A549 (cell line): ENCODE measurements at regions of chr19 and their contacts with region 1.

Region 1: GRCh38 chr19:33406521-33407139 is 33.1 kb downstream of the CEBPG start:
- DNase-seq: peak; percentile 76 to 95
- ATAC-seq: peak; percentile 54 to 89
- H3K4me3 ChIP-seq: no peak overlapping the region
- H3K27ac ChIP-seq: no peak overlapping the region
- H3K4me1 ChIP-seq: peaks cover 8% of the 10 kb centered on the region; the same call in 1 of the 3 replicates
- CTCF ChIP-seq: peak; percentile 99
- EP300 ChIP-seq: no peak
- POLR2A ChIP-seq: no peak
- RAD21 ChIP-seq: peak; percentile 100

Region 2: DNA sequence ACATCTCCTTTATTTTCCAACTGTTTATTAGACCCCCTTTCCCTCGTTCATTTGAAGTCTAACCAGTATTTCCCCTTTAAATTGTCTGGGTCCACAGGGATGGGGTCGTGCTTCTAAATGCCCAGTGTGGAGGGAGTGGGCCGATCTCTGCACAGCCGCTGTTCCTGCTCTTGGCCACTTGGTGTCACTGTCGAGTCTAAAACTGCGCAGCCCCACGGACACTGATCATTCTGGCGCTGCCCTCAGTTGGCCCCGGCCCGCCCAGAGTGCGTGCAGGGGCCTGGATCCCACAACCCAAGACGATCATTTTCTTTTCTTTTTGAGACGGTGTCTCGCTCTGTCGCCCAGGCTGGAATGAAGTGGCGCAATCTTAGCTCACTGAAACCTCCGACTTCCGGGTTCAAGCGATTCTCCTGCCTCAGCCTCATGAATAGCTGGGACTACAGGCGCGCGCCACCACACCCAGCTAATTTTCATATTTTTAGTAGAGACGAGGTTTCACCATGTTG is 262.7 kb before region 1 on chr19:
- CTCF ChIA-PET with region 1: interaction called, 15 read pairs
- POLR2A ChIA-PET with region 1: no interaction called
- DNase-seq: peak; percentile 83 to 98
- ATAC-seq: peak; percentile 91 to 97
- H3K4me3 ChIP-seq: no peak overlapping the region
- H3K27ac ChIP-seq: peak overlapping the region; percentile 14 to 62; a peak in 4 of 6 replicates
- H3K4me1 ChIP-seq: no peaks in the 10 kb centered on the region
- CTCF ChIP-seq: peak; percentile 99
- EP300 ChIP-seq: no peak
- POLR2A ChIP-seq: no peak
- RAD21 ChIP-seq: peak; percentile 97

Region 3: GRCh38 chr19:33208904-33209849 is 197.5 kb before region 1 on chr19:
- CTCF ChIA-PET with region 1: interaction called, 29 read pairs
- POLR2A ChIA-PET with region 1: no interaction called
- DNase-seq: no peak
- ATAC-seq: no peak
- H3K4me3 ChIP-seq: no peak overlapping the region
- H3K27ac ChIP-seq: no peak overlapping the region
- H3K4me1 ChIP-seq: no peaks in the 10 kb centered on the region
- CTCF ChIP-seq: no peak
- EP300 ChIP-seq: no peak
- POLR2A ChIP-seq: no peak
- RAD21 ChIP-seq: no peak

Region 4: GRCh38 chr19:33260628-33261418 is 145.8 kb before region 1 on chr19:
- CTCF ChIA-PET with region 1: interaction called, 83 read pairs
- POLR2A ChIA-PET with region 1: no interaction called
- DNase-seq: no peak
- ATAC-seq: 0 out of 6 replicates have a peak, but pooled peaks of 1 of the 2 experiments have one; percentile 7
- H3K4me3 ChIP-seq: no peak overlapping the region
- H3K27ac ChIP-seq: no peak overlapping the region
- H3K4me1 ChIP-seq: no peaks in the 10 kb centered on the region
- CTCF ChIP-seq: no peak
- EP300 ChIP-seq: no peak
- POLR2A ChIP-seq: no peak
- RAD21 ChIP-seq: no peak

Region 5: DNA sequence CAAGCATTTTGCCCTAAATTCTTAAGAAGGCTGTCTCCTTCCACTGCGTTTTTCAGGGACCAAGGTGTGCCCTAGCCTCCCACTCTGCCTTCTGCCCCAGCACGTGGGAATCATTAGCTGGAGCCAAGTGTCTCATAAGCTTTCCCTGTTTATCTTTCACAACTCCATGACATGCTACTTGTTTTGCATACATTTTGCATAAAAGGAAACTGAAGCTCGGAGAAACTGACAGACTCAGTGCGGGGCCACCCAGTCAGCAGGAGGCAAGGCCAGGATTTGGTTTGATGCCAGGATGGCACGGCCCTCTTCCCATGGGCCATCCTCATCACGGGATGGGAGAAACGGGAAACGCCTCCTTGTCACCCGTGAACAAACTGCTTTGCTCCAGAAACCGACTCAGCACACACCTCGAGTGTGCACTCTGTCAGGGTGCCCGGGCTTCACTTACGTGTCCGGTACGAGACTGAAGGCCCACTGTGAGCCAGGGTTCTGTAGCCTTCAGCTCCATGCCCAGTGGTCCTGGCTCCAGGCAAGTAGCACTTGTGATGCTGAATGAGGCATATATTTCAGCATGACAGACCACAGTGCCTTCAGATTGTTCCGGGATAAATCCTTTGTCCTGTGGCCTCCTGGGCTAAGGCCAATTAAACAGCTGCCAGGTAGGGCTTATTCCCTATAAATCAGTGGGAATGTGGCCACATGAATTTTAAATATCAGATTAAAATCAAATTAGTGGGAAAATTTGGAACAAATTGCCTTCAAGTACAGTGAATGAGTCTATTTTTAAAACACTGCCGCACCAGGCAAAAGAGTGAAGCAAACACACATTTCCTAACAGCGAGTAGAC is 113.8 kb before region 1 on chr19:
- CTCF ChIA-PET with region 1: interaction called, 75 read pairs
- POLR2A ChIA-PET with region 1: no interaction called
- DNase-seq: peak in 1 of 2 experiments; percentile 41
- ATAC-seq: peak; percentile 36 to 45
- H3K4me3 ChIP-seq: no peak overlapping the region
- H3K27ac ChIP-seq: peak overlapping the region; percentile 70 to 84
- H3K4me1 ChIP-seq: peaks cover 42% of the 10 kb centered on the region
- CTCF ChIP-seq: no peak; the same call in 1 of the 3 replicates
- EP300 ChIP-seq: no peak
- POLR2A ChIP-seq: no peak
- RAD21 ChIP-seq: no peak

Region 6: DNA sequence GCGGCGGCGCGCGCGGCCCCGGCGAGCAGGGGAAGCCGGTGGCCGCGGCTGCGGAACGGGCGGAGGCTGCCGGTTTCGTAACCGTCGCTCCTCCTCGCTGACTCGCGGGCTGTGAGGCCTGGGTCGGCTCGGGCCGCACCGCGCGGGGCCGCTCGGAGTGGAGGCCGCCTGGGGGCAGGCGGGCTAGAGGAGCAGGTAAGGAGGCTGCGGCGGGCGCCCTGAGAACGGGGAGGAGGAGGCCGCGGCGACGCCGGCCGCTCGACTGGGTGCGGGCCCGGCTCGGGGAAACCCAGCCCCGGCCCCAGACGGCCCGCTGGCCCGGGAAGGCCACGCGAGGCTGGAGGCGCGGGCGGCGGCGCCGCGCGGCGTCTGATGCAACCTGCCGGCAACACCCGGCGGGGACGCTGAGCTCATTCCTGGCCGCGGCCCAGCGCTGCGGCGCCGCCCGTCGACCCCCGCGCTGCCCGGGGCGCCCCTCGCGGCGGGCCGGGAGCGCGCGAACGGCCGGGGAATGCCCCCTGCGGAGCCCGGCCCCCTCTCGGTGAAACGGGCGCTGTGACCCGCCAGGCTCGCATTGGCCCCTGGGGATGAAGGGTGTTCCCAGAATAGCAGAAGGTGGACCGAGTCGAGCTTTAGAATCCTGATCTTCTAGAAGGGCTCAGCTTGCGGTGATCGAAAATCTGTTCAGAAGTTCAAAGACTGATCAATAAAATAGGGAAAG is 32.8 kb before region 1 on chr19 and contains the start of gene CEBPG:
- CTCF ChIA-PET with region 1: interaction called, 881 read pairs
- POLR2A ChIA-PET with region 1: interaction called, 5 read pairs
- DNase-seq: peak in 1 of 2 experiments; percentile 93
- ATAC-seq: peak; percentile 29 to 75
- H3K4me3 ChIP-seq: peak within 1 kb of the TSS; percentile 65
- H3K27ac ChIP-seq: peak within 1 kb of the TSS; percentile 92 to 95
- H3K4me1 ChIP-seq: peaks cover 37% of the 10 kb centered on the region
- CTCF ChIP-seq: peak; percentile 43
- EP300 ChIP-seq: peak in 1 of 2 experiments; percentile 67; a peak in 2 of 5 replicates
- POLR2A ChIP-seq: peak; percentile 73
- RAD21 ChIP-seq: no peak
- polyA plus RNA-seq, gene CEBPG: 104 and 138 TPM in 2 replicates

Region 7: GRCh38 chr19:33477781-33478180 is 71.2 kb after region 1 on chr19:
- CTCF ChIA-PET with region 1: no interaction called
- POLR2A ChIA-PET with region 1: no interaction called
- DNase-seq: no peak
- ATAC-seq: no peak
- H3K4me3 ChIP-seq: no peak overlapping the region
- H3K27ac ChIP-seq: no peak overlapping the region
- H3K4me1 ChIP-seq: 0 out of 3 replicates have a peak, but pooled peaks cover 5% of the 10 kb centered on the region
- CTCF ChIP-seq: no peak
- EP300 ChIP-seq: no peak
- POLR2A ChIP-seq: no peak
- RAD21 ChIP-seq: no peak

Region 8: GRCh38 chr19:33587150-33587549 is 180.5 kb after region 1 on chr19:
- CTCF ChIA-PET with region 1: no interaction called
- POLR2A ChIA-PET with region 1: no interaction called
- DNase-seq: no peak
- ATAC-seq: no peak
- H3K4me3 ChIP-seq: no peak overlapping the region
- H3K27ac ChIP-seq: no peak overlapping the region
- H3K4me1 ChIP-seq: no peaks in the 10 kb centered on the region
- CTCF ChIP-seq: no peak
- EP300 ChIP-seq: no peak
- POLR2A ChIP-seq: no peak
- RAD21 ChIP-seq: no peak

Region 9: DNA sequence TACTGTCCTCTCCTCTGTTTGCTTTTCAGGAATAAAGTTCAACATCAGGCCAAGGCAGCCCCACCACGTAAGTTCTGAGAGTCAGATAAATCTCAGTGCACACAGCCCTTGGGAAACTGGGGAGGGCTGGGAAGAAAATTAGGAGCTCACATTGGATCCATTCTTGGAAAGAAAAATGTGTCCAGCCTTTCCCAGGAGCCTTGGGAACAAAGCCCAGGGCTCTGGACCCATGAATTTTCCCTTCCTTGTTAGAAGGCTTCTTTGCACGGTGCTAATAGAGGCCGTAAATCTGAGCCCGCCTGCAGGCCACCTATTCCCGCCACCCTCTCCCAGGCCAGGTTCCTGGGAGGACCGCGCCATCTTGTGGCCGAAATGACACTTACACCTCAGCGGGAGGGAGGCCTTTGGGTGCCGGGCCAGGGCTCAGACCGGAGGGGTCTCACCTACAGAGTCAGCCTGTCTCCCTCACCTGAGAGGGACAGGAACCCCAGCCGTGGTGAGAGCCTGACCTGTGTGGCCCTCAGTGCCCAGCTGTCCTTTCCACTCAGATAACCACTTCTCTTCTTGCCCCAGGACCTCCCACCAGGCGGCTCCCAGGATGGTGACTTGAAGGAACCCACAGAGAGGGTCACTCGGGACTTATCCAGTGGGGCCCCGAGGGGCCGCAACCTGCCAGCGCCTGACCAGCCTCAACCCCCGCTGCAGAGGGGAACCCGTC is 364.9 kb after region 1 on chr19:
- CTCF ChIA-PET with region 1: interaction called, 455 read pairs
- POLR2A ChIA-PET with region 1: no interaction called
- DNase-seq: peak; percentile 80 to 94
- ATAC-seq: peak; percentile 54 to 91
- H3K4me3 ChIP-seq: no peak overlapping the region
- H3K27ac ChIP-seq: no peak overlapping the region
- H3K4me1 ChIP-seq: no peaks in the 10 kb centered on the region
- CTCF ChIP-seq: peak; percentile 98
- EP300 ChIP-seq: no peak
- POLR2A ChIP-seq: no peak
- RAD21 ChIP-seq: peak; percentile 99 to 100